ENCODE measurements at regions of chr4 and their contacts with region 1.

Region 1: GRCh38 chr4:152500800-152501434 is 35.0 kb downstream of the FBXW7 start:
- DNase-seq: peak; percentile 69
- ATAC-seq: peak; percentile 81
- H3K4me3 Mint-ChIP-seq: no peak overlapping the region
- H3K27ac Mint-ChIP-seq: no peak overlapping the region
- H3K4me1 Mint-ChIP-seq: peaks cover 34% of the 10 kb centered on the region
- H3K27me3 Mint-ChIP-seq: no peaks in the 10 kb centered on the region
- CTCF ChIP-seq: peak; percentile 92

Region 2: GRCh38 chr4:152458801-152459302 is 42.1 kb before region 1 on chr4:
- CTCF ChIA-PET with region 1: interaction called, 10 read pairs
- POLR2A ChIA-PET with region 1: no interaction called
- intact Hi-C with region 1: no loop called
- DNase-seq: peak; percentile 11
- ATAC-seq: peak; percentile 71
- H3K4me3 Mint-ChIP-seq: no peak overlapping the region
- H3K27ac Mint-ChIP-seq: peak overlapping the region; percentile 75
- H3K4me1 Mint-ChIP-seq: peaks cover 64% of the 10 kb centered on the region
- H3K27me3 Mint-ChIP-seq: no peaks in the 10 kb centered on the region
- CTCF ChIP-seq: no peak

Region 3: GRCh38 chr4:152515678-152516077 is 14.8 kb after region 1 on chr4:
- CTCF ChIA-PET with region 1: interaction called, 24 read pairs
- POLR2A ChIA-PET with region 1: no interaction called
- intact Hi-C with region 1: no loop called
- DNase-seq: no peak
- ATAC-seq: no peak
- H3K4me3 Mint-ChIP-seq: no peak overlapping the region
- H3K27ac Mint-ChIP-seq: no peak overlapping the region
- H3K4me1 Mint-ChIP-seq: peaks cover 37% of the 10 kb centered on the region
- H3K27me3 Mint-ChIP-seq: no peaks in the 10 kb centered on the region
- CTCF ChIP-seq: no peak

Region 4: GRCh38 chr4:152556283-152556682 is 55.4 kb after region 1 on chr4:
- CTCF ChIA-PET with region 1: interaction called, 12 read pairs
- POLR2A ChIA-PET with region 1: no interaction called
- intact Hi-C with region 1: no loop called
- DNase-seq: no peak
- ATAC-seq: no peak
- H3K4me3 Mint-ChIP-seq: peak overlapping the region; percentile 31
- H3K27ac Mint-ChIP-seq: peak overlapping the region; percentile 81
- H3K4me1 Mint-ChIP-seq: peaks cover 47% of the 10 kb centered on the region
- H3K27me3 Mint-ChIP-seq: no peaks in the 10 kb centered on the region
- CTCF ChIP-seq: no peak

Region 5: DNA sequence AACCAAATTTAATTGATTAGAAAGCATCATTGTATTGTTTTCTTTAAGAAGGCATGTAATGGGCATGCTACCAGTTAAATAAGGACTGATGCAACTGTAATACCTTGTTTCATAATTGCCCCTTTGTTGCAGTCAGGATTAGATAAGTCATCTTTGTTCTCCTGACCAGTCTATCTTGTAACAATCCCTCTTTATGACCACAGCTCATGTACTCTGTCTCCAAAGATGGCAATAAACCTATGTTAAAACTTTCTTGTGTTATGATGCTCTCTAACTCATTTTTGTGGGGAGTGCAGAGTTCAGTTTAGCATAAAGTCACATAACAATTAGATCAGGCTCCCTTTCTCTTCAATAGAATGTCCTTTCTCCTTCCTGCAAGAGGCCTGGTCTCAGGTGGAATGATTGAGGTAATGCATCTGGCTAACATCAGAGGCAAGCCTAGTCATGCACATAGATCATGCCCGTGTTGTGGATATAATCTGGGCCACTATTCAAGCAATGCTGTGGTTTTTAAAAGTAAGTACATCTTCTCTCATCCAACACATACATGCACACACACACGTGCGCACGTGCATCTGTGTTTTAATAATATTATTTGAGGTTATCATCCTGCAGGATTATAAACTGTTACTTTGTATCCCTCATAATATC is 133.3 kb after region 1 on chr4:
- CTCF ChIA-PET with region 1: interaction called, 149 read pairs
- POLR2A ChIA-PET with region 1: no interaction called
- intact Hi-C with region 1: no loop called
- DNase-seq: no peak
- ATAC-seq: no peak
- H3K4me3 Mint-ChIP-seq: no peak overlapping the region
- H3K27ac Mint-ChIP-seq: no peak overlapping the region
- H3K4me1 Mint-ChIP-seq: peaks cover 17% of the 10 kb centered on the region
- H3K27me3 Mint-ChIP-seq: no peaks in the 10 kb centered on the region
- CTCF ChIP-seq: no peak

Region 6: GRCh38 chr4:152735396-152735859 is 234.5 kb after region 1 on chr4:
- CTCF ChIA-PET with region 1: interaction called, 47 read pairs
- POLR2A ChIA-PET with region 1: no interaction called
- intact Hi-C with region 1: no loop called
- DNase-seq: no peak
- ATAC-seq: peak; percentile 27
- H3K4me3 Mint-ChIP-seq: no peak overlapping the region
- H3K27ac Mint-ChIP-seq: no peak overlapping the region
- H3K4me1 Mint-ChIP-seq: no peaks in the 10 kb centered on the region
- H3K27me3 Mint-ChIP-seq: peaks cover 3% of the 10 kb centered on the region
- CTCF ChIP-seq: peak; percentile 75

Region 7: DNA sequence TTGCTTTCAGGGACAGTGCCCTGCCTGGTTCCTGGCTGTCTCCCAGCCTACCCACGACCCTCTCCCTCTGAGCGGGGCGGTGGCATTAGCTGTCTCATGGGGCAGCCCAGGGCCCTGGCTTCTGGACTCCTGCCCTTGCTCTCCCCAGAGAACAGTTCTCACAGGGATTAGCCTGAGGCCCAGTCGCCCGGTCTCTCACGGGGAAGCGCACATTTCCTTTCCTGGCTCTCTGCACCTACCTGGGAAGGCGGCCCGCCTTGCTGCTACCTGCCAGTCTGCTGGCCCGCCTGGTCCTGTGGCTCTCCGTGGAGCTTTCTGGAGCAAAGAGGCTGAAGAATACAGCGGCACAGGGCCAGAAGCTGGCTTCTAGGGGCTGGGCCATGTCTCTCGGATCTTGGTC is 563.7 kb after region 1 on chr4:
- CTCF ChIA-PET with region 1: no interaction called
- POLR2A ChIA-PET with region 1: no interaction called
- intact Hi-C with region 1: no loop called
- DNase-seq: no peak
- ATAC-seq: no peak
- H3K4me3 Mint-ChIP-seq: no peak overlapping the region
- H3K27ac Mint-ChIP-seq: no peak overlapping the region
- H3K4me1 Mint-ChIP-seq: no peaks in the 10 kb centered on the region
- H3K27me3 Mint-ChIP-seq: no peaks in the 10 kb centered on the region
- CTCF ChIP-seq: no peak

Measured in activated CD8-positive, alpha-beta T cell treated with anti-CD3 and anti-CD28 coated beads for 36 hours (primary cell).